ENCODE measurements at regions of chr10 and their contacts with region 1.

Region 1: DNA sequence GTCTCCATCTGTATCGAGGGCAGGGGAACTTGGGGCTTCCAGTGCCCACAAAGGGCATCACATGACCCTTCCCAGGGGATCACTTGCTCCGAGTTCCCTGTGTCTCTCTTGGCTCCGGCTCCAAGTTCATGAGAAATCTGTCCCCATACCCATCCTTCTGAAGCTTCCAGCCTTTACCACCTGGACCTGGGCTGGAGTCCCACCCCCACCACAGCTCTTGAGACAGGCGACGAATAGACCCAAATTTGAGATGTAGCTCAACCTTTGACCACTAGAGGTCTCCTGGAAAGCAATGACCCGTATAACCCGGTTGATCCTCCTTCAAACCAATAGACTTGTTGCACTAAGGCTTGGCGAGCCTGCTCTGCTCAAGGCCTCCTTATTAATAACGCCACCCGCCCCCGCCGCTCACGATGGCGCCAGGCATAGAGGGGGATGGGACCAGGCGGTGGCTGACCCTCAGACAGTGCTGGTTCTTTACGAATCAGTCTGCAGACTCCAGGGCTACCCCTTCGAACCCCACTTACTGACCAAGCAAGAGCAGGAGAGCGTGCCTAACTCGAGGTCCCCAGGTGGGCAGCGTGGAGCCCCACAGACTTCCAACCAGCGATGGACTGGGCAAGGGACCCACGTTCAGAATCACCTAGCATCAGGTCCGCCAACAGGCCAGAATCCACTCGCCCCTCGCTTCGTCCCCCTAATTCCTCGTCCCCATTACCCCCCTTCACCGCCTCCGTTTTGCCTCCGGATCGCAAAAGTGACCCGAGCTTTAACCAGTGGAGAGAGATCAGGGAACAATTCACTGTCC is 4.4 kb upstream of the ARID5B start:
- DNase-seq: peak; percentile 59
- H3K4me3 ChIP-seq: peak overlapping the region in 2 of 3 experiments; percentile 4 to 6
- H3K27ac ChIP-seq: no peak overlapping the region
- H3K4me1 ChIP-seq: peaks cover 24% of the 10 kb centered on the region
- H3K27me3 ChIP-seq: no peaks in the 10 kb centered on the region
- CTCF ChIP-seq: peak; percentile 69 to 73
- POLR2A ChIP-seq: no peak

Region 2: GRCh38 chr10:61621605-61622060 is 275.4 kb before region 1 on chr10:
- CTCF ChIA-PET with region 1: no interaction called
- POLR2A ChIA-PET with region 1: no interaction called
- dilution Hi-C with region 1: no loop called
- intact Hi-C with region 1: loop called (anchors 2 kb)
- DNase-seq: peak; percentile 78
- H3K4me3 ChIP-seq: peak overlapping the region in 2 of 3 experiments; percentile 7 to 47
- H3K27ac ChIP-seq: peak overlapping the region; percentile 48
- H3K4me1 ChIP-seq: peaks cover 27% of the 10 kb centered on the region
- H3K27me3 ChIP-seq: no peaks in the 10 kb centered on the region
- CTCF ChIP-seq: no peak
- POLR2A ChIP-seq: no peak

Region 3: DNA sequence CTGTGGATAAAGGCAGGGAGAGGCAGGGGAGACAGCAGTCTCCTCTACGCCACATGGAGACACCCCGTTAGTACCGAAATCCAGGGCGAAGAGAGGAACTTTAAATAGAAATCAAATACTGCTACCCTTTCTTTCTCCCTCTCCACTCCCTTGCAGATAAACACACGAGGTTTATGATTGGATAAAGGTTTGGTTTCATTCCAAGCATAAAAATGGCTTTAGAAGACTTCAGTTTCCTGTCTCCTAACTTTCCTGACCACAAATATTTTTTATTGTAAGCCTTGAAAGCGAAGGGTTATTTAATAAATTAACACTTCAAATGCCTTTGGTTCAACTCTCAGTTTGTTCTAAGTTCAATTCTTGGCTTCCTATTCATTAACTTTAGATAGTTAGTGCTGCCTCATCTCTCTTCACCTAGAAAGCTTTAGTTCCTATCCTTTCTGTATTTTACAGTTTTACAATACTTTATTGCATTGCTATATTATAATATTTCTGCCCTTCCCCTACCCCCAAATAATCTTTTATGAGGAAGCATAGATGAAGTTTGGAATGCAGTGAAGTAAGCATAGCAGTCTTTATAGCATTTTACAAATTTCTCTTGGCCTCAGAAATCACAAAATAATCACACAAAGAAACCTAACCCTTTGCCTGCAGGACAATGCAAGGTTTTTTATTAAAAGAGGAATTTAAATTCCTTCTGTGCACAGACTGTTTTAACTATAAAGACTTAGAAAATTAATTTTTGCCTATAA is 27.1 kb before region 1 on chr10:
- CTCF ChIA-PET with region 1: interaction called, 21 read pairs
- POLR2A ChIA-PET with region 1: no interaction called
- dilution Hi-C with region 1: no loop called
- intact Hi-C with region 1: no loop called
- DNase-seq: peak; percentile 24
- H3K4me3 ChIP-seq: no peak overlapping the region
- H3K27ac ChIP-seq: no peak overlapping the region
- H3K4me1 ChIP-seq: no peaks in the 10 kb centered on the region
- H3K27me3 ChIP-seq: peaks cover 0 to 1% of the 10 kb centered on the region in 2 experiments
- CTCF ChIP-seq: no peak
- POLR2A ChIP-seq: no peak

Region 4: GRCh38 chr10:61937631-61938351 is 40.7 kb after region 1 on chr10:
- CTCF ChIA-PET with region 1: interaction called, 22 read pairs
- POLR2A ChIA-PET with region 1: no interaction called
- dilution Hi-C with region 1: no loop called
- intact Hi-C with region 1: loop called (anchors 1 kb)
- DNase-seq: peak; percentile 79
- H3K4me3 ChIP-seq: peak overlapping the region in 1 of 3 experiments; percentile 0
- H3K27ac ChIP-seq: peak overlapping the region; percentile 20
- H3K4me1 ChIP-seq: peaks cover 36% of the 10 kb centered on the region
- H3K27me3 ChIP-seq: no peaks in the 10 kb centered on the region
- CTCF ChIP-seq: no peak
- POLR2A ChIP-seq: no peak

Region 5: GRCh38 chr10:61992671-61993668 is 95.9 kb after region 1 on chr10:
- CTCF ChIA-PET with region 1: interaction called, 4 read pairs
- POLR2A ChIA-PET with region 1: interaction called, 5 read pairs
- dilution Hi-C with region 1: no loop called
- intact Hi-C with region 1: loop called (anchors 1 kb)
- DNase-seq: peak; percentile 78
- H3K4me3 ChIP-seq: peak overlapping the region in 1 of 3 experiments; percentile 46
- H3K27ac ChIP-seq: peak overlapping the region; percentile 50
- H3K4me1 ChIP-seq: peaks cover 23% of the 10 kb centered on the region
- H3K27me3 ChIP-seq: no peaks in the 10 kb centered on the region
- CTCF ChIP-seq: no peak
- POLR2A ChIP-seq: no peak

Region 6: GRCh38 chr10:62244780-62245467 is 347.9 kb after region 1 on chr10:
- CTCF ChIA-PET with region 1: interaction called, 31 read pairs
- POLR2A ChIA-PET with region 1: no interaction called
- dilution Hi-C with region 1: no loop called
- intact Hi-C with region 1: loop called (anchors 1 kb)
- DNase-seq: peak; percentile 86
- H3K4me3 ChIP-seq: no peak overlapping the region
- H3K27ac ChIP-seq: no peak overlapping the region
- H3K4me1 ChIP-seq: peaks cover 17% of the 10 kb centered on the region
- H3K27me3 ChIP-seq: no peaks in the 10 kb centered on the region
- CTCF ChIP-seq: peak; percentile 63 to 71
- POLR2A ChIP-seq: no peak

Measured in endothelial cell of umbilical vein (primary cell).